ENCODE measurements at regions of chr11 and their contacts with region 1.

Region 1: DNA sequence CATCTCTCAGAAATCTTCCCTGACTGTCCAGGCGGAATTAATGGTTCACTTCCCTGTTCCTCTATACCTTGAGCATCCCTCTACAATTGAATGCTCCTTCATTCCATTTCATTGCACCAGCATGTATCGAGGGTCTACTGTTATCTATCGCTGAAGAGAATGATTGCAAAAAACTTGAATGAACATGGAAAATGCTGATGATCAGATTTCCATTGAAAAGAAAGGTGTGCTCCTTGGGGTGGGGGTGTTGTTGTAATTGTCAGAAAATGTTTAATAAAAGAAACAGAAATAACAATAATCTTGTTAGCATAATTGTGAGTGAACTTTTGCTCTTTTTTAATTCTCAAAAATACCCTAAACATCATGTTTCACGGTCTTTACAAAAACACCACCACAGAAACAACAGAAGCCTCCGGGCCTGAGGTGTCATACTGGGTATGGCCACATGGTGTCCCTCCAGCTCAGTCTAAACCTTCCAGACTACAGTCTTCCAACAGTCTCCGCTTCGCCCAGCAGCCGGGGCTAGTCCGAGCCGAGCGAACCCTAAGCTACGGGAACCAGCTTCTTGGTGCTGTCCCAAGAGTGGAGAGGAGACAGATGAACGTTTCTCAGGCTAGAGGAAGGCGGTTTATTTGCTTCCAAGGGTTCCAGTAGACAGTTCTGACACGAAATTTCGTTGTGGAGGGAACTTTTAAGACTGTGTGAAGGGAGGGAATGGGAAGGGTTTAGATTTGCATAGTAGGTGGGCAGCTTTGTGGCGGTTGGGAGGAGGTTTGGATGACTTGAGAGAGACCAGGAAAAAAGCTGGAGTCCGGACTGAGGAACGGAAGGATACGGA is 75.8 kb upstream of the ZBED5 start:
- DNase-seq: peak; percentile 93
- H3K4me3 ChIP-seq: peak overlapping the region in 3 of 4 donors; percentile 31 to 54 (median 32)
- H3K27ac ChIP-seq: peak overlapping the region; percentile 86 to 97 (median 94)
- H3K4me1 ChIP-seq: peaks cover 12 to 54% (median 30%) of the 10 kb centered on the region in 4 donors
- H3K27me3 ChIP-seq: no peaks in the 10 kb centered on the region
- CTCF ChIP-seq: peak; percentile 92 to 99 (median 97)
- EP300 ChIP-seq: no peak
- POLR2A ChIP-seq: no peak

Region 2: DNA sequence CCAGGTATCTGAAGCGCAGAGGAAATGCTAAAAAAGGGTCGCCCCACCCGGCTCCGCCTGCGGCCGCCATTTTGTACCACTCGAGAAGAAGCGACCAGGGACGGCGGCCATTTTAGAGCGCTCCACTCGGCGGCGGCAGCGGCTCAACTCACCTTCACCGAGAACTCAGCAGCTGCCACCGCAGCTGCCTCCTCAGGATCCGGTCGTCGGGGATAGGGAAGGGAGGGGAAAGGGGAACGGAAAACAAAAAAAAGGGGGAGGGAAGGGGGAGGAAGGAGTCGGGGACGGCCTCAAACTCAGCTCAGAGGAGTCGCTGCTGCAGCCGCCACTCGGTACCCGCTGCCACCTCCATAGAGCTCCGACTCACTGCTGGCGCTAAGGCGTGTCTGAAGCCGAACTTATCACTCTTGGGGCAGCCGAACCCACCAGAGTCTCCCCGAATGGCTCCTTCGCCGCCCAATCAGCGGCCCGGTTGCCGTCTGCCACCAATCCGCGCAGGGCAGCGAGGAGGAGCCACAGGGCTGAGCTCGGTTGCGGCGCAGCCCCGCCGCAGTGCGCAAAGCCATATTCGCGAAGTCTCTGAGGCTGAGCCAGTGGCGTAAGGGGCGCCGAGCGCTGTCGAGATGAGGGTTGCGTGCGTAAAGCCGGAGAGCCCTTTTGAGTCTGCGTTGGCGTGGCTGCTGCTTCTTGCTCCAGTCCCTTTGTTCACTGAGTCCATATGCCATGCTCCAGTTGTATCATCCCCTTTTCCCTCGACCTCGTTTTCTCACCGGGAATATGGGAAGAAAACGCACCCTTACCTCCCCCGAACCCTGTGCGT is 124.9 kb before region 1 on chr11 and contains the start of gene EIF4G2:
- in situ Hi-C with region 1: no loop called
- intact Hi-C with region 1: loop called (anchors 2 kb)
- DNase-seq: peak; percentile 99
- H3K4me3 ChIP-seq: peak within 1 kb of the TSS; percentile 84 to 95 (median 91)
- H3K27ac ChIP-seq: peak within 1 kb of the TSS; percentile 96 to 100 (median 98)
- H3K4me1 ChIP-seq: peaks cover 27 to 42% (median 31%) of the 10 kb centered on the region in 4 donors
- H3K27me3 ChIP-seq: no peaks in the 10 kb centered on the region
- CTCF ChIP-seq: peak in 1 of 5 experiments; percentile 11
- EP300 ChIP-seq: no peak
- POLR2A ChIP-seq: peak; percentile 100
- total RNA-seq, gene EIF4G2: 357 to 482 (median 444) TPM

Region 3: DNA sequence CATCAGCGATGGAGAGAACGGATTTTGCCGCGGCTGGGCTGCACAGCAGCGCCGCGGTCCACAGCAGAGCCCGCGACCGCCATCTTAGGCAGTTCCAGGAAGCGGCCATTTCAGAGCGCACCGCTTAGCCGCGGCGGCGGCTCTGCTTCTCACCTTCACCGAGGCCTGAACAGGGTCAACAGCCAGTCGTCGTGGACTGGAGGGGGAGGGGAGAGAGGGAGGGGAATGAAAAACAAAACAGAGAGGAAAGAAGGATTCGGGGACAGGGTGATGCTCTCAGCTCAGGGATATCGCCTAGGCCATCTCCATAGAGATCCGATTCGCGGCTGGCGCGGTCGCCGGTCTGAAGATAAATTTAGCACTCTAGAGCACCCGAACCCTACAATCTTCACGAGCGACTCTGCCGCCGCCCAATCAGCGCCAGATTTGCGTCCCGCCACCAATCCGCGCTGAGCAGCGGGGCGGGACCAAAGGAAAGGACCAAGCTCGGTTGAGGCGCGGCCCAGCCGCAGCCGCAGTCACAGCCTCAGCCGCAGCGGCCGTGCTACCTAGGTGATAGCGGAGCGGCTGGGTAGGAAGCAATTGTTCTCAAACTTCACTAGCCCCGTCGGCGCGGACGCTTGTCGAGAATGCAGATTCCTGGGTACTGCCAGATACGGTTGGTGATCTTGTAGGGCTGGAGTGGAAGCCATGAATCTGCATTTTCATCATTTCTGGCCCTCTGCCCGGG is 75.8 kb before region 1 on chr11 and contains the start of gene ZBED5:
- in situ Hi-C with region 1: no loop called
- intact Hi-C with region 1: loop called (anchors 2 kb)
- DNase-seq: peak; percentile 98
- H3K4me3 ChIP-seq: peak within 1 kb of the TSS; percentile 70 to 87 (median 79)
- H3K27ac ChIP-seq: peak within 1 kb of the TSS; percentile 98 to 99 (median 99)
- H3K4me1 ChIP-seq: peaks cover 0 to 42% (median 19%) of the 10 kb centered on the region in 4 donors
- H3K27me3 ChIP-seq: no peaks in the 10 kb centered on the region
- CTCF ChIP-seq: peak in 4 of 5 experiments; percentile 22 to 47 (median 36)
- EP300 ChIP-seq: no peak
- POLR2A ChIP-seq: peak; percentile 99
- total RNA-seq, gene ZBED5: 13.7 to 38.4 (median 29.7) TPM

Region 4: GRCh38 chr11:11022125-11022730 is 88.6 kb after region 1 on chr11:
- in situ Hi-C with region 1: loop called (anchors 5 to 10 kb)
- intact Hi-C with region 1: loop called (anchors 2 kb)
- DNase-seq: no peak
- H3K4me3 ChIP-seq: no peak overlapping the region
- H3K27ac ChIP-seq: no peak overlapping the region
- H3K4me1 ChIP-seq: no peaks in the 10 kb centered on the region
- H3K27me3 ChIP-seq: no peaks in the 10 kb centered on the region
- CTCF ChIP-seq: peak; percentile 49 to 56 (median 52)
- EP300 ChIP-seq: no peak
- POLR2A ChIP-seq: no peak

Region 5: DNA sequence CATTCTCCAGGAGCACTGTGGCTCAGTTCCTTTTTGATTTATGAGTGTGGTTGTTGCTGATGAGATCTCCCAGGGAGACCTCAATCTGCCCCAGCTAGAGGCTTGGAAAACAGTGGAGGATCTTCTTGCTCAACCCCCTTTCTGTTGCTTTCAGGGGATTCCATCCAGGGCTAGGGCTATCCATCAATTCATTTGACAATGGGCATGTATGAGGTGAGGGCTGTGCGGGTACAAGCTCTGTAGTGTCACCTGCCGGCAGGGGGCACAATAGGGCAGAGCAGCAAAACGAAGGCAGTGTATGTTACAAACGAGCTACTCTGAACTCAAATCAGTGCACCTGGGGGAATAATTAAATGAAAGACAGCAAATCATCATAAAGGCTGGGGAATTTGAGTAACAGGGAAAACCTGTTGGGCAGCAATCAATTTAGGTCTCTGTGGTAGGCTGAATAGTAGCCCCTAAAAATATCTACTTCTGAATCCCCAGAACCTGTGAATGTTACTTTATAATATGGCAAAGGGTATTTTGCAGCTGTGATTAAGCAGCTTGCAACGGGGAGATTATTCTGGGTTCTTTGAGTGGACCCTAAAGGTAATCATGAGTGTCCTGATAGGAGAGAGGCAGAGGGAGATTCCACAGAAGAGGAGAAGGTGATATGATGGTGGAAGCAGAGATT is 94.5 kb after region 1 on chr11:
- in situ Hi-C with region 1: loop called (anchors 5 to 10 kb)
- intact Hi-C with region 1: loop called (anchors 2 kb)
- DNase-seq: peak; percentile 77
- H3K4me3 ChIP-seq: no peak overlapping the region
- H3K27ac ChIP-seq: no peak overlapping the region
- H3K4me1 ChIP-seq: no peaks in the 10 kb centered on the region
- H3K27me3 ChIP-seq: no peaks in the 10 kb centered on the region
- CTCF ChIP-seq: peak; percentile 79 to 83 (median 79)
- EP300 ChIP-seq: no peak
- POLR2A ChIP-seq: no peak

Region 6: GRCh38 chr11:11265994-11266606 is 332.4 kb after region 1 on chr11:
- in situ Hi-C with region 1: no loop called
- intact Hi-C with region 1: loop called (anchors 10 kb)
- DNase-seq: peak; percentile 60
- H3K4me3 ChIP-seq: no peak overlapping the region
- H3K27ac ChIP-seq: no peak overlapping the region
- H3K4me1 ChIP-seq: no peaks in the 10 kb centered on the region
- H3K27me3 ChIP-seq: no peaks in the 10 kb centered on the region
- CTCF ChIP-seq: peak; percentile 68 to 83 (median 72)
- EP300 ChIP-seq: no peak
- POLR2A ChIP-seq: no peak

Region 7: DNA sequence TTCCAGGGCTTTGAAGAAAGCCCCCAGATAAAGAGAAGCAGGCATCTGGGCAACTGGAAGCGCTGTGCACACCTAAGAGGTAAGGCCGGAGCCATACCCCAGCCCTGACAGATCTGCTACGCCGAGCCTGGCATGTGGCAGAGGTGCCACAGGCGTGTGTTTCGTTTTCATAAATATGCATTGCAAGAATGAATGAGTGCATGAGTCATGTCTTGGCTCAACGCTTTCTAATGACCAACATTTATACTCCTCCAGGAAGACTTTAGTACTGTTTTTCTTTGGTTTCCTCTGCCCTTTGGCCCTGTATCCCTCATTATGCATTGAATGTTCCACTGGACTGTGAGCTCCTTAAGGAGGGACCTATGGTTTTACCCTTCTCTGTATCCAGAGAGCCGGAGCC is 458.1 kb after region 1 on chr11:
- in situ Hi-C with region 1: no loop called
- intact Hi-C with region 1: no loop called
- DNase-seq: peak; percentile 45
- H3K4me3 ChIP-seq: no peak overlapping the region
- H3K27ac ChIP-seq: peak overlapping the region; percentile 38 to 61 (median 54)
- H3K4me1 ChIP-seq: peaks cover 7 to 48% (median 18%) of the 10 kb centered on the region in 4 donors
- H3K27me3 ChIP-seq: no peaks in the 10 kb centered on the region
- CTCF ChIP-seq: peak in 1 of 5 experiments; percentile 22
- EP300 ChIP-seq: no peak
- POLR2A ChIP-seq: no peak